HEK293 (cell line): ENCODE measurements at regions of chr19 and their contacts with region 1.

Region 1: GRCh38 chr19:43826787-43827754 is at the start of gene ZNF283:
- H3K4me3 ChIP-seq: peak within 1 kb of the TSS; percentile 67
- H3K27ac ChIP-seq: peak within 1 kb of the TSS; percentile 44; the same call in 1 of the 2 replicates
- H3K4me1 ChIP-seq: peaks cover 6% of the 10 kb centered on the region
- CTCF ChIP-seq: no peak

Region 2: DNA sequence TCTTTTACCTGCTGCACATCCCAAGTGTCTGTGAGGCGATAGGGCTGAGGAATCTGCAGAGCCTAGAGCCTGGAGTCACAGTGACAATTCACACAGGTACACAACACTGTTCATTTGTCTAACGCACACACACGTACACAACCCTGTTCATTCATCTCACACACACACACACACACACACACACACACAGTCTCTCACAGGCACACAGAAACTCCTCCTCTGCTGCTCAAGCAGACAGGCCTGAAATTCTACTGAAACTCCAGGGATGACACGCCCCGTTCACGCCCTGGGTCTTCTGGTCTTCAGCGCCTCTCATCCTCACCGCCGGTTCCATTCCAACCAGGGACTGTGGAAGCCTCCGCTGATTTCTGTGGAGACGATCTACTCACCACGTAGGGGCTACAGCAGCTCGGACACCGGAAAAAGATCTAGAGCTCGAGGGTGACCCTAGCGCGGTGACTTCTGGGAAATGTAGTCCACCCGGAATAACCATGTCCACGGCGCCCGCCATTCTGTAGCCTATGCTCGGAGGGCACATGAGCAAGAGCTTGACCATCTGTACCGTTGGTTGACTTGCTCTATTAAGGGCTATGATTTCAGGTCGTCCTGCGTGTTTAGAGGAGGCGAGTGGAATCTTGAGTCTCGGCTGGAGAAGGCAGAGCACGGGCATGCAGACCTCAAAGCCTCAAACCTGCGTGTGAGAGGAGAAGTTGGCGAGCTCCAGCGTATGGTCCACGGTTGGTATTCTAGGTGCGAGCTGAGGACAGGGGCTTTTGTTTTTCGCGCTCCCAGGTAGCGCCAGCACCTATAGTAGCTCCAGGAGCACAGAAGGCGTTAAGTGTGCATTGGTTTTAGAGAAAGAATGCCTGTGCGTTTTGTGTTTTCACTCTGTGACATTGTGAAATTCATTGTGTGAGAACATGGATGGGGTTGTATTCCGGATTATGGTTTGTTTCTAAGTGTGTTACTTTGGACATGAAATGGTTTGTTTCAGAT is 74.6 kb after region 1 on chr19:
- CTCF ChIA-PET with region 1: no interaction called
- POLR2A ChIA-PET with region 1: interaction called, 13 read pairs
- H3K4me3 ChIP-seq: peak overlapping the region; percentile 41
- H3K27ac ChIP-seq: peak overlapping the region; percentile 30; the same call in 1 of the 2 replicates
- H3K4me1 ChIP-seq: peaks cover 9% of the 10 kb centered on the region
- CTCF ChIP-seq: no peak

Region 3: GRCh38 chr19:44141191-44142058 is 314.4 kb after region 1 on chr19 and contains the start of gene ZNF234:
- CTCF ChIA-PET with region 1: no interaction called
- POLR2A ChIA-PET with region 1: no interaction called
- H3K4me3 ChIP-seq: peak within 1 kb of the TSS; percentile 56
- H3K27ac ChIP-seq: peak within 1 kb of the TSS; percentile 71
- H3K4me1 ChIP-seq: peaks cover 19% of the 10 kb centered on the region
- CTCF ChIP-seq: peak; percentile 80